ENCODE measurements at regions of chr20 and their contacts with region 1.

Region 1: GRCh38 chr20:57654363-57654997 is 34.3 kb upstream of the ZBP1 start:
- DNase-seq: peak in 4 of 5 donors; percentile 30 to 53 (median 39)
- ATAC-seq: peak; percentile 45 to 64 (median 54)
- H3K4me3 ChIP-seq: no peak overlapping the region
- H3K27ac ChIP-seq: no peak overlapping the region
- H3K4me1 ChIP-seq: peaks cover 0 to 18% (median 5%) of the 10 kb centered on the region in 12 donors
- H3K27me3 ChIP-seq: no peaks in the 10 kb centered on the region
- CTCF ChIP-seq: peak; percentile 85 to 94 (median 90)
- POLR2A ChIP-seq: no peak

Region 2: GRCh38 chr20:57709931-57710799 is 55.7 kb after region 1 on chr20 and contains the start of gene PMEPA1:
- intact Hi-C with region 1: loop called in 3 of 10 experiments (anchors 2 to 5 kb)
- DNase-seq: peak; percentile 96 to 97 (median 96)
- ATAC-seq: peak; percentile 81 to 93 (median 91)
- H3K4me3 ChIP-seq: peak within 1 kb of the TSS; percentile 65 to 96 (median 77)
- H3K27ac ChIP-seq: peak within 1 kb of the TSS; percentile 63 to 98 (median 93)
- H3K4me1 ChIP-seq: peaks cover 0 to 74% (median 38%) of the 10 kb centered on the region in 12 donors
- H3K27me3 ChIP-seq: peaks cover 0 to 3% (median 0%) of the 10 kb centered on the region in 9 donors
- CTCF ChIP-seq: peak in 4 of 12 donors; percentile 8 to 26 (median 18)
- POLR2A ChIP-seq: peak in 1 of 2 donors; percentile 94
- total RNA-seq, gene PMEPA1: 25.1 to 91.4 (median 30.0) TPM

Region 3: DNA sequence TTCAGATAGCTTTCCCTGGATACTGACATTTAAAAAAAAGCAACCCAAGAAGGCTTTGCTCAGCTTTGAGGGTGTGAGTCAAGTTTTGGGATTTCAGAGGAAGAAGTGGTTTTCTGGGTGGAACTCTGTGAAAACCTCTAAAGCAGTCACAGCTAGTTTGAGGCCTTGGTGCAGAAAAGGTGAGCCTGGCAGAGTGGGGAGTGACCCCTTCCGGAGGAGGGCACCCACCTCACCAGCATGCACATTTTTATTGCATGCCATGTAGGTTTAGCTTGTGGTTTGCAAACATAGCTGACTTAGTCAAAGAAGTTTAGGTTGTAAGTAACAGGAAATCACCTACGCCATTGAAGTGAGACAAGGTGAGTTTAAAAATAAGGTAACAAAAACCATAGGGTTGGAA is 202.2 kb after region 1 on chr20:
- intact Hi-C with region 1: loop called in 1 of 10 experiments (anchors 10 kb)
- DNase-seq: no peak
- ATAC-seq: no peak
- H3K4me3 ChIP-seq: no peak overlapping the region
- H3K27ac ChIP-seq: no peak overlapping the region
- H3K4me1 ChIP-seq: peaks cover 0 to 6% (median 0%) of the 10 kb centered on the region in 12 donors
- H3K27me3 ChIP-seq: no peaks in the 10 kb centered on the region
- CTCF ChIP-seq: no peak
- POLR2A ChIP-seq: no peak

Region 4: DNA sequence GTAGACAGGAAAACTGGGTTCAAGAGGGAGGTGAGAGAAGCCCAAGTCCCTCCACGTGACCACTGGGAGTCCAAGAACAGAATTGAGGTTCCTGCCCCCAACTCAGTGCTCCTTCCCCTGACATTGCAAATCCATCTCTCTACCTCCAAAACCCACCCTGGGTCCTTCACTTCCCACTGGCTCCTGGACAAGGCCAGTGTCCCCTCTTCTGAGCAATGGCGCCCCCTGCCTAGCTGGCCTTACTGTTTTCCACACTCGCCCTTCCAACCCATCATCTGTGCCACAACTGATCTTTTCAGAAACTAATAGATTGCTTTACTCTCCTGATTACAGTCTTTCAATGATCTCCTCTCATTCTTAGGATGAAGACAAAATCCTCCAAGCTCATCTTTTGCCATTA is 373.6 kb after region 1 on chr20:
- intact Hi-C with region 1: loop called in 1 of 10 experiments (anchors 10 kb)
- DNase-seq: no peak
- ATAC-seq: no peak
- H3K4me3 ChIP-seq: no peak overlapping the region
- H3K27ac ChIP-seq: no peak overlapping the region
- H3K4me1 ChIP-seq: peaks cover 0 to 14% (median 0%) of the 10 kb centered on the region in 12 donors
- H3K27me3 ChIP-seq: peaks cover 0 to 16% (median 0%) of the 10 kb centered on the region in 9 donors
- CTCF ChIP-seq: peak in 7 of 12 donors; percentile 16 to 40 (median 28)
- POLR2A ChIP-seq: no peak

Region 5: GRCh38 chr20:58179432-58180099 is 525.1 kb after region 1 on chr20:
- intact Hi-C with region 1: loop called (anchors 1 to 10 kb)
- DNase-seq: peak; percentile 39 to 82 (median 60)
- ATAC-seq: peak; percentile 12 to 82 (median 70)
- H3K4me3 ChIP-seq: peak overlapping the region in 9 of 12 donors; percentile 13 to 49 (median 27)
- H3K27ac ChIP-seq: peak overlapping the region in 1 of 12 donors; percentile 7
- H3K4me1 ChIP-seq: peaks cover 0 to 22% (median 11%) of the 10 kb centered on the region in 12 donors
- H3K27me3 ChIP-seq: peaks cover 0 to 16% (median 2%) of the 10 kb centered on the region in 9 donors
- CTCF ChIP-seq: peak; percentile 97 to 100 (median 99)
- POLR2A ChIP-seq: no peak